CD4-positive, alpha-beta T cell (primary cell): ENCODE measurements at regions of chr19 and their contacts with region 1.

Region 1: GRCh38 chr19:3852614-3853254 is 16.1 kb downstream of the ZFR2 start:
- DNase-seq: peak in 13 of 14 experiments; percentile 8 to 57 (median 27)
- ATAC-seq: no peak
- H3K4me3 ChIP-seq: no peak overlapping the region
- H3K4me3 Mint-ChIP-seq: no peak overlapping the region
- H3K27ac ChIP-seq: no peak overlapping the region
- H3K27ac Mint-ChIP-seq: no peak overlapping the region
- H3K4me1 ChIP-seq: peaks cover 4% of the 10 kb centered on the region
- H3K4me1 Mint-ChIP-seq: no peaks in the 10 kb centered on the region
- H3K27me3 ChIP-seq: no peaks in the 10 kb centered on the region
- H3K27me3 Mint-ChIP-seq: no peaks in the 10 kb centered on the region
- CTCF ChIP-seq: no peak

Region 2: GRCh38 chr19:3599776-3600183 is 253.0 kb before region 1 on chr19:
- CTCF ChIA-PET with region 1: no interaction called
- POLR2A ChIA-PET with region 1: no interaction called
- intact Hi-C with region 1: loop called in 1 of 2 experiments (anchors 10 kb)
- DNase-seq: no peak
- ATAC-seq: no peak
- H3K4me3 ChIP-seq: no peak overlapping the region
- H3K4me3 Mint-ChIP-seq: no peak overlapping the region
- H3K27ac ChIP-seq: no peak overlapping the region
- H3K27ac Mint-ChIP-seq: no peak overlapping the region
- H3K4me1 ChIP-seq: peaks cover 8% of the 10 kb centered on the region
- H3K4me1 Mint-ChIP-seq: no peaks in the 10 kb centered on the region
- H3K27me3 ChIP-seq: peaks cover 0 to 3% of the 10 kb centered on the region in 2 experiments
- H3K27me3 Mint-ChIP-seq: no peaks in the 10 kb centered on the region
- CTCF ChIP-seq: no peak

Region 3: GRCh38 chr19:3733549-3734309 is 119.0 kb before region 1 on chr19:
- CTCF ChIA-PET with region 1: no interaction called
- POLR2A ChIA-PET with region 1: no interaction called
- intact Hi-C with region 1: no loop called
- DNase-seq: no peak
- ATAC-seq: no peak
- H3K4me3 ChIP-seq: no peak overlapping the region
- H3K4me3 Mint-ChIP-seq: no peak overlapping the region
- H3K27ac ChIP-seq: no peak overlapping the region
- H3K27ac Mint-ChIP-seq: no peak overlapping the region
- H3K4me1 ChIP-seq: peaks cover 6% of the 10 kb centered on the region
- H3K4me1 Mint-ChIP-seq: peaks cover 9% of the 10 kb centered on the region
- H3K27me3 ChIP-seq: no peaks in the 10 kb centered on the region
- H3K27me3 Mint-ChIP-seq: no peaks in the 10 kb centered on the region
- CTCF ChIP-seq: no peak

Region 4: GRCh38 chr19:4208385-4209094 is 355.8 kb after region 1 on chr19:
- CTCF ChIA-PET with region 1: no interaction called
- POLR2A ChIA-PET with region 1: no interaction called
- intact Hi-C with region 1: loop called in 1 of 2 experiments (anchors 1 kb)
- DNase-seq: no peak
- ATAC-seq: no peak
- H3K4me3 ChIP-seq: no peak overlapping the region
- H3K4me3 Mint-ChIP-seq: no peak overlapping the region
- H3K27ac ChIP-seq: no peak overlapping the region
- H3K27ac Mint-ChIP-seq: no peak overlapping the region
- H3K4me1 ChIP-seq: peaks cover 3% of the 10 kb centered on the region
- H3K4me1 Mint-ChIP-seq: no peaks in the 10 kb centered on the region
- H3K27me3 ChIP-seq: peaks cover 0 to 5% of the 10 kb centered on the region in 2 experiments
- H3K27me3 Mint-ChIP-seq: peaks cover 9% of the 10 kb centered on the region
- CTCF ChIP-seq: peak; percentile 19

Region 5: DNA sequence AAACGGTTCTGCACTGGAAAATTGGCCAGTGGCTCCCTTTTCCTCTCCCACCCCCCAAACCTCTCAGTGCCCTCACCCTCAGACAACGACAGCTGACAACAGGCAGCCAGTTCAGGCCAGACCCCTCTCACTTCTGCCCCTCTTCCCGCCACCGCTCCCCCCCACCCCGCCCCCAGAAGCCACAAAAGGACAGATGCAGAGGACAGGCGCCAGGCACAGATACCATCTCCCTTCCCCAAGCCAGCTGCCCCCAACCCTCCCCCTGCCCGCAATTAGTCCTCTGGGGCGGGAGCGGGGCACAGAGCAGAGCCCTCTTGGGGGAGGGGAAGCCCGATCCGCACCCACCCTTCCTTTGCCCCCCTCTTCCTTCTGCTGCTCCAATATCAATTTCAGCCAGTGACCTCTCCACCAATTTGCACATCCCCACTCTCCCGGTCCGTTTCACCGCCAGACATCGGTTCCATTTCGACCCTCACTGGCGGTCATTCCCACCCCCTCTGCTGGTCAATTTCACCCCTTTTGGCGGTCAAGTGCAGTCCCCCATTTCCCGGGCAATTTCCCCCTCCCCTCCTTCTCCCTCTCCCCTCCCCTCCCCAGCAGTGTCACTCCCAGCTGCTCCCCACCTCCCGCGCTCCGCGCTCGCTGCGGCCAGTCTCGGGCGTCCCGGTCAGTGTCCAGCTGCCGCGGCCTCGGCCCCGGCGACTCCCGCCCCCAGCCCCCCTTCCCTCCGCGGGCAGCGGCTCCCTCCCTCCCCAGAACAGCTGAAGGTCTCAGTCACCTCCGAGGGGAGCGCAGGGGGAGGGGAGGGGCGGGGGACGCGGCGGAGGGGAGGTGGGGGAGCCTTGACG is 425.9 kb after region 1 on chr19 and contains the start of gene SHD:
- CTCF ChIA-PET with region 1: no interaction called
- POLR2A ChIA-PET with region 1: no interaction called
- intact Hi-C with region 1: no loop called
- DNase-seq: no peak
- ATAC-seq: no peak
- H3K4me3 ChIP-seq: no peak within 1 kb of the TSS
- H3K4me3 Mint-ChIP-seq: peak within 1 kb of the TSS; percentile 45
- H3K27ac ChIP-seq: no peak within 1 kb of the TSS
- H3K27ac Mint-ChIP-seq: no peak within 1 kb of the TSS
- H3K4me1 ChIP-seq: peaks cover 15% of the 10 kb centered on the region
- H3K4me1 Mint-ChIP-seq: no peaks in the 10 kb centered on the region
- H3K27me3 ChIP-seq: peaks cover 15 to 16% of the 10 kb centered on the region in 2 experiments
- H3K27me3 Mint-ChIP-seq: peaks cover 30% of the 10 kb centered on the region
- CTCF ChIP-seq: no peak
- total RNA-seq, gene SHD: 0.14 to 0.64 TPM